AG04450 (cell line): ENCODE measurements at regions of chr14 and their contacts with region 1.

Region 1: DNA sequence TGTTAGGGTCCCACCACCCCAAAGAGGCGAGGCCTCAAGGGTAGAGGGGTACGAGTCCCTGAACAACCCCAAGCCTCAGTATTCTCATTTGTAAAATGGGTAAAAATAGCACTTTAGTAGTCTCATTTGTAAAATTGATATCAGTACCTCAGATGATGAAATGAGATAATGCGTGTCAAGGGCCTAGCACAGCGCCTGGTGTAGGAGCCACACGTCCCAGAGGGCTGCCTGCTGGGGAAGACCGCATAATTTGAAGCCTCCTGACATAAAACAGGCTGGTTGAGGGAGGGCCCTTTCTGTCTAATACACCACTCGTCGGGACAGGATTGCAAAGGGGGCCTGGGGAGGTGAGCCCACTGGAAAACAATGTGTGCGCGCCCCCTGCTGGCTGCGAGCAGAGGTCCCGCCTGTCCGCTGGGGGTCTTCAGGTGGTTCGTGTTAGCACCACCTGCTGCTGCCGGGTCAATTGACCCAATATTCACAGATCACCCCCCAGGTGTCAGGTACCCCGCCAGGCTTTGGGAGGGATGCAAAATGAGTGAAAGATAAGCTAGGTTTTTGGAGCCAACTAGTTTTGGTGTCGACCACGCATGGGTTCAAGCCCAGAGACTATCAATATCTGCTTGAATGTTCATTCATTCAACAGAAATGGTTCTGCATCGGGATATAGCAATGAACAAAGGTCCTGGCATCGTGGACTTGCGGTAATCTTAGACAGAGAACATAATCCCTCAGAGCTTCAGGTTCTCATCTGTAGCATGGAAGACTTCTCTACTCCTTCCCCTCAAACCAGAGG is 24.7 kb upstream of the IRF2BPL start:
- DNase-seq: no peak
- H3K4me3 ChIP-seq: no peak overlapping the region
- H3K27ac ChIP-seq: peak overlapping the region; percentile 21
- H3K27me3 ChIP-seq: no peaks in the 10 kb centered on the region
- CTCF ChIP-seq: peak; percentile 89

Region 2: DNA sequence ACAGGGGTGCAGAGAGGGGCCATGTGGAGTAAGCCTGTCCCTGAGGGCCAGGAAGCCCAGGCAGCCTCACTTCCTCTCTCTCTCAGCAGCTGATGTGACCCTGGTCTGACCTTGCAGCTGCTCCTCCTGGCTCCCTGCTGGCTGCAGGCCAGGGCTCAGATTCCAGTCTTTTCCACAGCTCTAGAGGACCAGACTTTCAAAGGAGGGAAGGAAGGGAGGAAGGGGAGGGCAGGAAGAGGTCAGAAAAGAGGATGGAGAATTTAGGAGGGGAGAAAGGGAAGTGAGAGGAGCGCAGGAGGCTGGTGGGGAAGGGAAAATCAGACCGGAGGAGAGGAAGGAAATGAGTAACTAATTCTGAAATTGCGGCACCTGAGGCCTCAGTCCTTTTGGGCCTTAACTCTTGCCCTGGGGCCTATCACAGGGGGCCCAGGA is 332.8 kb before region 1 on chr14:
- CTCF ChIA-PET with region 1: no interaction called
- POLR2A ChIA-PET with region 1: no interaction called
- DNase-seq: peak; percentile 10
- H3K4me3 ChIP-seq: no peak overlapping the region
- H3K27ac ChIP-seq: no peak overlapping the region
- H3K27me3 ChIP-seq: peaks cover 17% of the 10 kb centered on the region
- CTCF ChIP-seq: no peak

Region 3: DNA sequence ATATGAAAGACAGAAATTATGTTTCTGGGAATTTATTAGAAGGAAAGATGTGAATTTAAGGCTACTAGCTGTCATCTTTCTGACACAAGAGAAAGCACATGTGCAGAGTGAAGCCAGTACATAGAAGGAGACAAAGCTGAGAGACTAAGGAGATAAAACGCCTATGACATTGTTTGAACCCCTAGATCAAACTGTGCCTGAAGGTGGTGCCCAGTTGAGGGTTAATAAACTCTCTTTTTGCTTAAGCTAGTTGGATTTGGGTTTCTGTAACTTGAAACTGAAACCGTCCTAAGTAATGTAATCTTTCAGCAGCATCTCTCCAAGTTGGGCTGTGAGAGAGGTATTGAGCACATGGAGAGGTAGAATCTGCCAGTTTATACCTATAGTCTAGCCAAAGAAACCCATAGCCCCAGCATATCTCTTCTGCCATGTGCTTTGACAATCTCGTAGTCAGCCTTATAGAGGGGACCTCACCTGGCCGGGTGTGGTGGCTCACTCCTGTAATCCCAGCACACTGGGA is 142.8 kb before region 1 on chr14:
- CTCF ChIA-PET with region 1: interaction called, 111 read pairs
- POLR2A ChIA-PET with region 1: no interaction called
- DNase-seq: no peak
- H3K4me3 ChIP-seq: no peak overlapping the region
- H3K27ac ChIP-seq: no peak overlapping the region
- H3K27me3 ChIP-seq: no peaks in the 10 kb centered on the region
- CTCF ChIP-seq: no peak

Region 4: DNA sequence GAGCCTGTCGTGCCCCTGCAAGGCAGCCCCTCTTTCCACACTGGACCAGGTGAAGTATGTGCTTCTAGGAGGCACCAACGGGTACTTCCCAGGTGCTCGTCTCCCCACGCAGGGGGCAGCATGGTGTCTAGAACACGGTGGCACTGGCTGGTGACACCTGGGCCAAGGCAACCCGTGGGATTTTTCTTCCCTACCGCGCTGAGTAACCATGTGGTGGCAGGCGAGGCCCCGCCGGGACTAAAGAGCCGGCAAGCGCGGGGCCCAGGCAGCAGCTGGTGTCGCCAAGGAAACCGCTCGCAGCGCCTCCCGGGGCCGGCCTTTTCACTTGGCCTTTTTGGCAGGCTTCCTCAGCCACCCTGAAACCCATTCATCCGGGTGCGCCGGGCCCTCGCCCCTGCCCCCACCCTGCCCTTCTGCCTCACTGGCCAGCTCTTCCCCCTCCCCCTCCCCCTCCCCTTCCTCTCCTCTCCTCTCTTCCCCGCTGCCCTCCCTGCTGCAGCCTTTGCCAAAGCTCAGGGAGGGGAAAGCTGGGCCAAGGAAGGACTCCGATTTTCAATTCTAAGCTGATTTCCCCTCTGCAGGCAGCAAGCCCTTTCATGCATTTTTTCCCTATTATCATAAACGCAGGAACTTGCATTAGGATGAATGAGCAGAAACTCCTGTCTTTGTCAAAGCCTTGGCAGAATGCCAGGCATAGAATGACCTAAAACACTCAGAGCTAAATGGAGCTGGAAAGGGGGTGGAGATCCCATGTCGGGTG is 106.0 kb before region 1 on chr14:
- CTCF ChIA-PET with region 1: interaction called, 12 read pairs
- POLR2A ChIA-PET with region 1: no interaction called
- DNase-seq: peak; percentile 61
- H3K4me3 ChIP-seq: peak overlapping the region; percentile 22; the same call in 1 of the 2 replicates
- H3K27ac ChIP-seq: peak overlapping the region; percentile 93
- H3K27me3 ChIP-seq: no peaks in the 10 kb centered on the region
- CTCF ChIP-seq: peak; percentile 35; the same call in 1 of the 2 replicates

Region 5: DNA sequence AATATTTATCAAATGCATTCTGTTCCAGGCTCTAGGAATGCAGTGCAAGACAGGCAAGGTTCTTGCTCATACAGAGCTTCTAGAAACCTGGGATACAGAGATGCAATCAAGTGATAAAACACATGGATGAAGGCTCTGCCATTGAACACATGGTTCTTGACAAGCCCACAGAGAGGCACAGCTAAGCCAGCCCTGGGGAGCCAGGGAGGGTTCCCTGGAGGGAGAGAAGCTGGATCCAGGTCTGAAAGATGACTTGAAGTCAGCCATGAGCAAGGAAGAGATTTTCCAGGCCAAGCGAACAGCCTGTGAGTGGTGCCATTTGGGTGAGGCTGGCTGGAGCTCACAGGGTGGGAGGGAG is 91.0 kb before region 1 on chr14:
- CTCF ChIA-PET with region 1: interaction called, 11 read pairs
- POLR2A ChIA-PET with region 1: no interaction called
- DNase-seq: no peak
- H3K4me3 ChIP-seq: peak overlapping the region; percentile 50
- H3K27ac ChIP-seq: peak overlapping the region; percentile 97
- H3K27me3 ChIP-seq: no peaks in the 10 kb centered on the region
- CTCF ChIP-seq: no peak

Region 6: GRCh38 chr14:77040059-77040740 is 13.0 kb before region 1 on chr14:
- CTCF ChIA-PET with region 1: interaction called, 19 read pairs
- POLR2A ChIA-PET with region 1: interaction called, 10 read pairs
- DNase-seq: peak; percentile 97
- H3K4me3 ChIP-seq: peak overlapping the region; percentile 51
- H3K27ac ChIP-seq: peak overlapping the region; percentile 99
- H3K27me3 ChIP-seq: no peaks in the 10 kb centered on the region
- CTCF ChIP-seq: no peak

Region 7: DNA sequence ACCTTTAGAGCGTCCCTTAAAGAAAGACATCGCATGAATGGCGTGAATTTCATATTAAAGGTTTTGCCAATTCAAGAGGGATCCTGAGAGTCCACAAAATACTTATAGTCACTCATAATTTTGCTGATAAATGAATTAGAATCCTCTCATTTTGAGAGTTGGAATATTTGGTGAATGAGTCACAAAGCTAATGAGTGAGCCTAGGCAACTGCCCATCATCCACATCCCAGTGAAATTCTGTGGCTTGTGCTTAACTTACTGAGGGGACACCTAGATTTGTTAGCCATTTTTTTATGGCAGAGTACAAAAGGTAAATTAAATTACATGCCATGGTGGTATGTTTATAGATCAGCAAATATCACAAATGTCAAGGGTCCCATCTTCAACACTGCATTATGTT is 382.8 kb after region 1 on chr14:
- CTCF ChIA-PET with region 1: no interaction called
- POLR2A ChIA-PET with region 1: no interaction called
- DNase-seq: no peak
- H3K4me3 ChIP-seq: no peak overlapping the region
- H3K27ac ChIP-seq: no peak overlapping the region
- H3K27me3 ChIP-seq: no peaks in the 10 kb centered on the region
- CTCF ChIP-seq: no peak